ENCODE measurements at regions of chr5 and their contacts with region 1.

Region 1: DNA sequence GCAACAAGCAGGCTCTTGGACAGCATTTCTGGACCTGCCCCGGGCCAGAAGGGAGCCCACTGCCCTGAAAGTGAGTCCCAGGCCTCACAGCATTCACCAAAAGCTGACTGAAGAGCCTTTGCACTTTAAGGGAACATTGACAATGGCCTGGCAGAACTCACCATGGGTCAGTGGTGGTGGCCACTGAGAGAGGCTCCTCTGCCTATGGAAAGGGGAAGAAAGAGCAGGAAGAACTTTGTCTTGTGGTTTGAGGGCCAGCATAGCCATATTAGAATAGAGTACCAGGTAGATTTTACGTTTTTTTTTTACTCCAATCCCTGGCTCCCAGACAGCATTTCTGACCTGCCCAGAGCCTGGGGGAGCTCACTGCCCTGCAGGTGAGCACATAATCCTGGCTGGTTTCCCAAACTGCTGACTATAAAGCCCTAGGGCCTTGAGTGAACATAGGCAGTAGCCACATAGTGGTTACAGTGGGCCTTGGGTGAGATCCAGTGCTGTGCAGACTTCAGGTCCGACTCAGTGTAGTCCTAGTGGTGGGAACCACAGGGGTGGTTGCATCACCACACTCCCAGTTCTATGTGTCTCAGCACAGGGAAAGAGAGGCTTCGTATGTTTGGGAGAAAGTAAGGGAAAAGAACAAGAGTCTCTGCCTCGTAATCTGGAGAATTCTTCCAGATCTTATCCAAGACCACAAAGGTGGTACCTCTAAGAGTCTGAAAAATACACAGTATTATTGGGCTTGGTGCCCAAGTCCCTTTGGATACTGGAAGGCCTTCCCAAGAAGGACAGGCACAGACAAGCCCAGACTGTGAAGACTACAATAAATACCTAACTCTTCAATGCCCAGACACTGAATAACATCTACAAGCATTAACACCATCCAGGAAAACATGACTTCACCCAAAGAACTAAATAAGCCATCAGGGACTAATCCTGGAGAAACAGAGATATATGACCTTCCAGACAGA is 89.5 kb downstream of the TSSK1B start:
- DNase-seq: no peak
- H3K4me3 ChIP-seq: no peak overlapping the region
- H3K27ac ChIP-seq: no peak overlapping the region
- H3K4me1 ChIP-seq: no peaks in the 10 kb centered on the region
- H3K27me3 ChIP-seq: no peaks in the 10 kb centered on the region
- CTCF ChIP-seq: no peak
- EP300 ChIP-seq: no peak
- POLR2A ChIP-seq: no peak

Region 2: GRCh38 chr5:113598926-113599325 is 253.7 kb after region 1 on chr5:
- in situ Hi-C with region 1: no loop called
- intact Hi-C with region 1: no loop called
- DNase-seq: no peak
- H3K4me3 ChIP-seq: no peak overlapping the region
- H3K27ac ChIP-seq: no peak overlapping the region
- H3K4me1 ChIP-seq: no peaks in the 10 kb centered on the region
- H3K27me3 ChIP-seq: no peaks in the 10 kb centered on the region
- CTCF ChIP-seq: no peak
- EP300 ChIP-seq: no peak
- POLR2A ChIP-seq: no peak

Region 3: DNA sequence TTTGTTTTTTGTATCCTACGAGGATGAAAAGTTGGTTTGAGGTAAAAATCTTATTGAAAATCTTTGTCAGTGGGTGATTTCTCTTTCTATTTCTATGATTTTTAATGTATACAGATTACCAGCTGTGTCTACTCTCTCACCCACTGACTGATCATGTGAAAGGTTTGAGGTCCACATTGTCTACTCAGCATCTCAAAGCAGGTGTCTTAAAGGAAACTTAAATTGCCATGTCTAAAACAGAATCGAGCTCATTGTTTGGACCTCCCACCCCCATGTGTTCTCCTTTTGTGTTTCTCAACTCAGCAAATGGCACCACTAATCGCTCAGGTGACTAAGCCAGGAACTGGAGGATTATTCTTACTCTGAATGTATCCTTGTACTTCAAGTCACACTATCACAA is 289.7 kb after region 1 on chr5:
- in situ Hi-C with region 1: no loop called
- intact Hi-C with region 1: no loop called
- DNase-seq: no peak
- H3K4me3 ChIP-seq: no peak overlapping the region
- H3K27ac ChIP-seq: no peak overlapping the region
- H3K4me1 ChIP-seq: no peaks in the 10 kb centered on the region
- H3K27me3 ChIP-seq: no peaks in the 10 kb centered on the region
- CTCF ChIP-seq: no peak
- EP300 ChIP-seq: no peak
- POLR2A ChIP-seq: no peak

Region 4: DNA sequence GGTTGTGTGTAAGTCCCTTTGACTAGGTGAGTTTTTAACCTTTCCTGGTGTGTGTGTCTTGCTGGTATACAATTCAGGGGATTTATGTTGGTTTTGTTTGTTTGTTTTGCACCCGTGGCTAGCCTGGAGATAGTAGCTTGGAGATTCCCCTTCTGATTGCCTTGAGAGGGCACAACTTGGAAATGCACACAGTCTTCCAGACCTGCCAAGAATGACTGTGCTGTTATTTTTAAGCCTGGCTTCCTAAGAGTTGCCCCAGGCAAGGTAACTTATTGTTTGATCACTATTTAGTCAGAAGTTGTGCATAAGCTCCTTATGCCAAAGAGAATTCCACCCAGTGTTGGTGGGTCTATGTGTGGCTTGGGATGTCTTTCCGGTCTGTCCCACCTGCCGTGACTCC is 594.7 kb after region 1 on chr5:
- in situ Hi-C with region 1: no loop called
- intact Hi-C with region 1: loop called (anchors 5 kb)
- DNase-seq: no peak
- H3K4me3 ChIP-seq: no peak overlapping the region
- H3K27ac ChIP-seq: no peak overlapping the region
- H3K4me1 ChIP-seq: peaks cover 0 to 4% (median 1%) of the 10 kb centered on the region in 4 donors
- H3K27me3 ChIP-seq: no peaks in the 10 kb centered on the region
- CTCF ChIP-seq: no peak
- EP300 ChIP-seq: no peak
- POLR2A ChIP-seq: no peak